Vagina (tissue), 2 donors: ENCODE measurements at regions of chr14 and their contacts with region 1.

Region 1: DNA sequence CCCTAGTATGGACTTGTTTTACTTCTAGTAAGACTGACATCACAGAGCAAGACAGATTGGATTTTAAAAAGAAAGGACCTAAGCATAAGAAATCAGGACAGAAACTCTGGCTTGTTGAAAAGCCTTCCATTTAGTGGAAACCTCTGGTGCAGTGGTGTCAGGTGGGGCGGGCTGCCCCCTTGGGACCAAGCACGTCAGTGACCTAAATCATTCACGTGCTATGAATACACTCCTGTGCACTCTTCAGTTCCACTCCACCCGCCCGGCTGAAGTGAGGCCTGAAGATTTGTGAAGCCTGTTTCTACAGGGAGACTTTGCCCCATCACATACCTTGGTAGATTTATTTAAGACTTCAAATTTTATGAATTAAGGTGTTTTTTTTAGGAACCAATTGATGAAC is 58.2 kb upstream of the STRN3 start:
- DNase-seq: no peak
- H3K4me3 ChIP-seq: no peak overlapping the region
- H3K27ac ChIP-seq: no peak overlapping the region
- H3K4me1 ChIP-seq: peaks cover 1% of the 10 kb centered on the region
- H3K27me3 ChIP-seq: no peaks in the 10 kb centered on the region
- CTCF ChIP-seq: no peak
- POLR2A ChIP-seq: no peak

Region 2: DNA sequence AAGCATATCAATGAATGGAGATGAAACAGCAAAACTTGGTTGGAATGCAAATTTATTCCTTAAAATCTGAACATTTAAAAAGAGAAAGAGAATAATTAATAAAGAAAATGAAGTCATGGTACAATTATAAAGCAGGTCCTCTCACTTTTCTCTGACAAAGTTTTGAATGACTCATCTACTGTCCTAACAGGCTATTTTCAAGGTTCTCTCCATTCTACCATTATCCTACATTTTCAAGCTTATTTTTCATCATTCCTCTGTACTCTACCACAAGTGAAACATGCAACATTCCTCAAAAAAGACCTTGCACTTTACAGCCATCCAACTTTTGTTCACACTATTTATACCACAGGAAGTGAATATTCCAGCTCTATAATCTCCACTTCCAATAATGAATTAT is 95.9 kb before region 1 on chr14:
- intact Hi-C with region 1: loop called (anchors 10 kb)
- DNase-seq: no peak
- H3K4me3 ChIP-seq: no peak overlapping the region
- H3K27ac ChIP-seq: no peak overlapping the region
- H3K4me1 ChIP-seq: peaks cover 22% of the 10 kb centered on the region
- H3K27me3 ChIP-seq: no peaks in the 10 kb centered on the region
- CTCF ChIP-seq: no peak
- POLR2A ChIP-seq: no peak

Region 3: DNA sequence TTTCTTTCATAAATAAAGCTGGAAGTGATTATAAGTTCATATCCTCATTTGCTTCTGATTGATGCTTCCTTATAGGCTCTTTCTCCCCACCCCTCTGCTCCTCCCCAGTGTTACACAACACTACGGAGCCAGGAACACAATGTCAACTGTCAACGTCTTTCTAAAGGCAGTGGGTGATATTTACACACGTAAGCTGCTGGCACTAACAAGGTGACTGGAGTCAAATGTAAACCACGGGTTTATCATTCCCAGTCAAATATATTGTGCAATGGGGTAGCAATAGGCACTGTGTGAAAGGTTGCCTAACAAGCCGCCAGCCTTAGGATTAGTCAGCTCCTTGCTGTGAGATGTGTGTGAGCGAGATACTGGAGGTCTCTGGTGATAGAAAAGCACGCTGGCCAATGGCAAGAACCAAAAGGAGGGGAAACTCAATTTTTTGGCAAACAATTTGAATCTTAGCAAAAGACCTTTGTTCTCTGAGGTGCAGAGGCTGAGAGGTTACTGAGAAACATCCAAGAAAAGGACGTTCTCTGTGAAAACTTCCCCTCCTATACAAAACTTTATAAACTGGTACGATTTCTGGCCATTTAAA is 145.3 kb after region 1 on chr14:
- intact Hi-C with region 1: no loop called
- DNase-seq: peak in 1 of 2 donors; percentile 95
- H3K4me3 ChIP-seq: no peak overlapping the region
- H3K27ac ChIP-seq: peak overlapping the region; percentile 61
- H3K4me1 ChIP-seq: peaks cover 5% of the 10 kb centered on the region
- H3K27me3 ChIP-seq: no peaks in the 10 kb centered on the region
- CTCF ChIP-seq: no peak
- POLR2A ChIP-seq: no peak

Region 4: DNA sequence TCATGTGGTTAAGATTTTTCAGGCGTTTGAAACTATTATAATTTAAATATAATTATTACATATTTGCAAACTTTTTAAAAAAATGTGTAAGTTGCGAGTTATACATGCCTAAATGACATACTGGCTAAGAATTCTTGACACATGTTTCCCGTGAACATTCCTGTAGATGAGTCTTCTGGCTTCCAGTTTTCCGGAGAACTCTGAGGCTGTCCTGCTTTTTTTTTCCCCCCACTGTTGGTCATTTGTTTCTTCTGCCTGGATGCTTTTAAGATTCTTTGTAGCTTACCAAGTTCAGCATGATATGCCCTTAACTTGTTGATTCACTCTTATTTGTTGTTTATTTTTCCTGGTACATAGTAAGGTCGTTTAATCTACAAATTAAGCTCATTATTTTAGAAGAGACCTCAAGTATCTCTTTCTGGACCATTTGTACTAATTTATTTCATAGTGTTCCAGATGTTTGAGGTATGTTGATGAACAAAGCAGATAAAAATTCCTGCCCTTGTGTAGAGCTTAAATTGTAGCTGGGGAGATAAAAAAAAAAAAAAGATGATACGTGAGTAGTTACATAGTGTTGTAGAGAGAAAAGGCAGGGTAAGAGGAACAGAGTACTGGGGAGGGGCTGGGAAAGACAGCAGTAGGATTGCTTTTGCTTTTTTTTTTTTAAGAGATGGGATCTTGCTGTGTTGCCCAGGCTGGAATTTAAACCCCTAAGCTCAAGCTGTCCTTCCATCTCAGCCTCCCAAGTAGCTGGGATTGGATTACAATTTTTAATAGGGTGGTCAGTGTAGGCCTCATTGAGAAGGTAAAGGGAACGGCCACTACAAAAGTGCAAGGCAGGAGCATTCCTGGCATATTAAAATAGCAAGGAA is 1025.5 kb after region 1 on chr14:
- intact Hi-C with region 1: no loop called
- DNase-seq: no peak
- H3K4me3 ChIP-seq: no peak overlapping the region
- H3K27ac ChIP-seq: no peak overlapping the region
- H3K4me1 ChIP-seq: peaks cover 22% of the 10 kb centered on the region
- H3K27me3 ChIP-seq: no peaks in the 10 kb centered on the region
- CTCF ChIP-seq: no peak
- POLR2A ChIP-seq: no peak